Activated T-helper 1 cell treated with anti-CD3 and anti-CD28 coated beads, Interleukin-12 subunit alpha, Interleukin-12 subunit beta, Interleukin-2, Interleukin-4 antibody, amounts not matched to agents 30 ng/mL and 10 ng/mL and 1 ng/mL, durations not matched to agents 14 hours and 24 hours and 36 hours (primary cell): ENCODE measurements at regions of chr6 and their contacts with region 1.

Region 1: DNA sequence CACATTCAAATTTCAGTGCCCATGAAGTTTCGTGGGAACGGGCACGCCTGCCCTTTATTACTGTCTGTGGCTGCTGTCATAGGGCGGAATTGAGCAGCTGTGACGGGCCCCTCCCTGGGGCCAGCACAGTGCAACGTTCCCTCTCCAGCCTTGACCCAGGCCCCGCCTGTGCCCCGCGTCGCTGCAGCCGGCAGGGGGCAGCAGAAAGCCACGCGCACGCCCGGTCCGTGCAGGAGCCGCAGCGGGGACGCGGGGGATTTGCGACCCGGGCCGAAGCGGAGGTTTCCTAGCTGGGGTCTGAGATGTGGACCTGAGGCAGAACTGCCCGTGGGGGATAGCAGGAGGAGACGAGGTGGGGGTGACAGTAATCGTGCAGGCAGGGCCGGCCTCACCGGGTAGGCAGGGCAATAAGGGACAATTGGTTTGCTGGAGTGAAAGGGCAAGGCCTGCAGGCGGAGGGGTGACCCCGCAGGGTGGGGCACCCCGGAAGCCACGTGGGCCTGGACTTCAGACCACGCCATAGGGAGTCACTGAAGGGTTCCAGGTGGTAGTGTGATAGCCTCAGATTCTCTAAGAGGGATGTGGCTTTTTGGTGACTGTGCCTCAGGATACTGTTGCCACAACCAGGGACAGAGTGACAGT is 54.4 kb downstream of the SYTL3 start:
- DNase-seq: peak; percentile 72
- H3K4me3 Mint-ChIP-seq: peak overlapping the region; percentile 66
- H3K27ac Mint-ChIP-seq: peak overlapping the region; percentile 67
- H3K4me1 Mint-ChIP-seq: peaks cover 20% of the 10 kb centered on the region
- H3K27me3 Mint-ChIP-seq: no peaks in the 10 kb centered on the region

Region 2: DNA sequence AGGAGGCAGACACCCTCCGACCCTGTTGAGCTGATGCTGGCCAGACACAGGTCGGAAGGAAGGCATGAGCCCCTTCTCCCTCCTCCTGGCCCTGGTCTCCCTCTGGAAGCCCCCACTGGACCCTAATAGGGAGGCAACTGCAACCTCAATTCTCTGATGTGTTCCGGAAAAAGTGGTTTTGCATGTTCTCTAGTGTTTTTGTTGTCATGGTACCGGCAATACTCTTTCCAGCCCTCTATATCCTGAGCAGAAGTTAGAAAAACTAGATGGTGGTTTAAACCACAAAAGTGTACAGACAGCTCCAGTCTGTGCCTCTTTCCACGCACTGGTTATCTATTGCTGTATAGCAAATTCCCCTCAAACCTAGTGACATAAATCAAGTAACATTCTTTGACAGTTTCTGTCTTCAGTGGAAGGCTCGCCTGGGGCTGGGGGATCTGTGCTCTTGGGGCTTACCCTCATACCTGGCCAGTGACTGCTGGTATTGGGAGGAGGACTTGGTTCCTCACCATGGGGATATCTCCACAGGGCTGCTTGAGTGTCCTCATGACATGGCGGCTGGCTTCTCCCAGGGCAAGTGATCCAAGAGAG is 17.4 kb before region 1 on chr6:
- intact Hi-C with region 1: loop called (anchors 2 kb)
- DNase-seq: peak; percentile 61
- H3K4me3 Mint-ChIP-seq: peak overlapping the region; percentile 74
- H3K27ac Mint-ChIP-seq: peak overlapping the region; percentile 90
- H3K4me1 Mint-ChIP-seq: peaks cover 62% of the 10 kb centered on the region
- H3K27me3 Mint-ChIP-seq: no peaks in the 10 kb centered on the region

Region 3: GRCh38 chr6:158718461-158719046 is 14.3 kb after region 1 on chr6:
- intact Hi-C with region 1: loop called (anchors 2 kb)
- DNase-seq: no peak
- H3K4me3 Mint-ChIP-seq: no peak overlapping the region
- H3K27ac Mint-ChIP-seq: no peak overlapping the region
- H3K4me1 Mint-ChIP-seq: peaks cover 69% of the 10 kb centered on the region
- H3K27me3 Mint-ChIP-seq: peaks cover 2% of the 10 kb centered on the region

Region 4: GRCh38 chr6:159104163-159104925 is 400.0 kb after region 1 on chr6:
- intact Hi-C with region 1: loop called (anchors 5 kb)
- DNase-seq: peak; percentile 69
- H3K4me3 Mint-ChIP-seq: peak overlapping the region; percentile 67
- H3K27ac Mint-ChIP-seq: peak overlapping the region; percentile 63
- H3K4me1 Mint-ChIP-seq: peaks cover 80% of the 10 kb centered on the region
- H3K27me3 Mint-ChIP-seq: no peaks in the 10 kb centered on the region

Region 5: GRCh38 chr6:159134701-159135364 is 430.5 kb after region 1 on chr6:
- intact Hi-C with region 1: loop called (anchors 1 kb)
- DNase-seq: peak; percentile 67
- H3K4me3 Mint-ChIP-seq: no peak overlapping the region
- H3K27ac Mint-ChIP-seq: no peak overlapping the region
- H3K4me1 Mint-ChIP-seq: peaks cover 10% of the 10 kb centered on the region
- H3K27me3 Mint-ChIP-seq: peaks cover 10% of the 10 kb centered on the region